Left ventricle myocardium superior (tissue), 1 donor: ENCODE measurements at regions of chr11 and their contacts with region 1.

Region 1: GRCh38 chr11:112289588-112290492 is 29.2 kb upstream of the PLET1 start:
- DNase-seq: peak; percentile 93
- ATAC-seq: peak; percentile 88

Region 2: DNA sequence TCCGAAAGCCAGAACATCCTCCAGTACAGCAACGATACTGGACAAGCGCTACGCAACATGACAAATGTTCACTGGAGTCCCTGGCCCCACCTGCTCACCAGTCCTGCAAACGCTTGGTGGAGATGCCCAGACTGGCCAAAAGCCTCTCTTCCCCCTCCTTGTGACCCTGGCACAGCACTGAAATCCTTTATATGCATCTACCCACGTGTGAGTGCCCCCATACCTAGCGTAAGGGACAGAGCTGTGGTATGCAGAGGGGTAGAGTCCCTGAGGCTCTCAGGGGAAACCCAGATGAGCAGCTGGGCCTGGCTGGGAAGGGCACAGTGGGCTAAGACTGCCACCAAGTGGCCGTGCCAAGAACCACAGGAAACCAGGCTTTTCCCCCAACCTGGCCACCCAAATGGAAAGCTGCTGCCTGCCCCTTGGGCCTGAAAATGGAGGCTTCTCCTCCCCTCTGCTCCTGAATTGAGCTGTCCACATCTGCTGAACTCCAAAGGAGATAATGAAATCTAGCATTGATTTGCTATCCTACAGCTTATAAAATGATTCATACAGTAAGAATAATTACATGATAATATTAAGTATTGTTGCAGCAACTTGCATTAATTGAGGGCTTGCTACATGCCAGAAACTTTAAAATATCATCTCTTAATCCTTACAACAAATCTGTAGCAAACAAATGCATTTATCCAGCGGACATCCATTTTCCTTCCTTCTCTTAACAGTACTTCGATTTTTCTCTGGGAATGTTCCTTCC is 999.8 kb after region 1 on chr11:
- intact Hi-C with region 1: loop called (anchors 10 kb)
- DNase-seq: peak; percentile 65
- ATAC-seq: peak; percentile 84